Activated CD4-positive, alpha-beta T cell treated with anti-CD3 and anti-CD28 coated beads, Interleukin-2, amount 10 ng/mL, durations not matched to agents 24 days and 14 days (primary cell): ENCODE measurements at regions of chr10 and their contacts with region 1.

Region 1: GRCh38 chr10:110857265-110858158 is 14.2 kb upstream of the PDCD4 start:
- DNase-seq: peak; percentile 69
- H3K4me3 Mint-ChIP-seq: peak overlapping the region; percentile 44
- H3K27ac Mint-ChIP-seq: peak overlapping the region; percentile 87
- H3K4me1 Mint-ChIP-seq: peaks cover 66% of the 10 kb centered on the region
- H3K27me3 Mint-ChIP-seq: no peaks in the 10 kb centered on the region

Region 2: GRCh38 chr10:110414563-110415309 is 442.8 kb before region 1 on chr10:
- intact Hi-C with region 1: no loop called
- DNase-seq: peak; percentile 95
- H3K4me3 Mint-ChIP-seq: peak overlapping the region; percentile 39
- H3K27ac Mint-ChIP-seq: peak overlapping the region; percentile 94
- H3K4me1 Mint-ChIP-seq: peaks cover 62% of the 10 kb centered on the region
- H3K27me3 Mint-ChIP-seq: no peaks in the 10 kb centered on the region

Region 3: DNA sequence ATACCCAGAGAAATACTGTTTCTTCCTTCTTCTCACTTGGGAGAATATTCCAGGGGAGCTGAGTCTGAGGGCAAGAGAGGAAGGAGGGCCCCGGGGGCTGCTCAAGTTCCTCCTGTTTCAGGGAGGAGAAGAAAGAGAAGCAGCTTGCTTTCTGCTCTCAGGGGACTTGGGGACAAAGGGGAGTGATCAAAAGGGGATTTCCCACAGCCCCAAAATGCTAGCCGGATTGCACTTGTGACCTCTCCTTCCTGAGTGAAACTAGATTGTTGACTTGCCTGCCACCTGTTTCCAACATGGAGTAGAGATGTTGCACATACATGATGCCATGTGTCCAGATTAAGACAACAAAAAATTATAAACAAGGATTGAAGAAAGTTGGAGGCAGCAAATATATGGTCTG is 14.5 kb before region 1 on chr10:
- intact Hi-C with region 1: loop called (anchors 2 kb)
- DNase-seq: peak; percentile 90
- H3K4me3 Mint-ChIP-seq: peak overlapping the region; percentile 30
- H3K27ac Mint-ChIP-seq: peak overlapping the region; percentile 82
- H3K4me1 Mint-ChIP-seq: peaks cover 49% of the 10 kb centered on the region
- H3K27me3 Mint-ChIP-seq: no peaks in the 10 kb centered on the region

Region 4: GRCh38 chr10:110871298-110872084 is 14.0 kb after region 1 on chr10 and contains the start of gene PDCD4:
- intact Hi-C with region 1: loop called (anchors 1 kb)
- DNase-seq: peak; percentile 99
- H3K4me3 Mint-ChIP-seq: peak within 1 kb of the TSS; percentile 88
- H3K27ac Mint-ChIP-seq: peak within 1 kb of the TSS; percentile 95
- H3K4me1 Mint-ChIP-seq: peaks cover 55% of the 10 kb centered on the region
- H3K27me3 Mint-ChIP-seq: no peaks in the 10 kb centered on the region
- total RNA-seq, gene PDCD4: 45.2 and 53.6 TPM in 2 replicates